A549 (cell line): ENCODE measurements at regions of chr1 and their contacts with region 1.

Region 1: GRCh38 chr1:44786138-44786840 is 1.7 kb downstream of the BEST4 start:
- DNase-seq: peak; percentile 75 to 77
- ATAC-seq: peak; percentile 63 to 70
- H3K4me3 ChIP-seq: peak overlapping the region; percentile 49
- H3K27ac ChIP-seq: peak overlapping the region; percentile 89 to 93
- H3K4me1 ChIP-seq: peaks cover 6% of the 10 kb centered on the region
- CTCF ChIP-seq: peak; percentile 76
- EP300 ChIP-seq: no peak
- POLR2A ChIP-seq: peak; percentile 40
- RAD21 ChIP-seq: peak; percentile 68 to 74

Region 2: DNA sequence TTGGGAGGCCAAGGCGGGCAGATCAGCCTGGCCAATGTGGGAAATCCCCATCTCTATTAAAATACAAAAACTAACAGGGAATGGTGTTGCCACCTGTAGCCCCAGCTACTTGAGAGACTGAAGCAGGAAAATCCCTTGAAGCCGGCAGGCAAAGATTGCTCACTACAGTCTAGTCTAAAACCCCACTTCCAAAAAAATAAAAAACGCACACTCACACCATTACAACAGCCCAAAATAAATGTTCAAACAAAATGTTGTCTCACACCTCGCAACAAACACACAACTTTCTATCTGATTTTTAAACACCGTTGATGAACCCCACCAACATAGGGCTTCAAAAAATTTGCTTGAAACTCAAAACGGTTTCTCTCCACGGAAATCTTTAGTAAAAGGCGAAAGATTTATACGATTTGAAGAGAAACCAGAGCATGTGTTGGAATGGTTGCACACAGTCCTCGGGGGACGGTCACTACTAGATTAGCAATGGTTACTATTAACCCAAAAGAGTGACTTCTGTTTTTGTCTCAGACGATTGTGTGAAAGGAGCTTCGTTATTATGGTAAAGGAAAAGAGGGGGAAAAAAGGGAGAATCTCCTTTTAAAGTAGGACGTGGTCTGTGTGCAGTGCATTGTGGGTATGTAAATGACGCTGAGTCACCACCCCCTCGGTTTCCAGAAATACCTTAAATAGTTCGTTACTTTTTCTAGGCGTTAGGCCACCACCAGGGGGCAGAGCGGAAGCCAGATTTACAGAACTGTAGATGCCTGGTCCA is 55.4 kb before region 1 on chr1 and contains the start of gene RNU5D-1:
- CTCF ChIA-PET with region 1: interaction called, 11 read pairs
- POLR2A ChIA-PET with region 1: no interaction called
- DNase-seq: peak; percentile 72 to 94
- ATAC-seq: peak; percentile 90 to 93
- H3K4me3 ChIP-seq: peak within 1 kb of the TSS; percentile 35
- H3K27ac ChIP-seq: peak within 1 kb of the TSS; percentile 86 to 94
- H3K4me1 ChIP-seq: peaks cover 19% of the 10 kb centered on the region
- CTCF ChIP-seq: peak; percentile 68
- EP300 ChIP-seq: no peak
- POLR2A ChIP-seq: peak; percentile 81
- RAD21 ChIP-seq: no peak
- polyA plus RNA-seq, gene RNU5D-1: not detected in 2 replicates

Region 3: GRCh38 chr1:44812822-44813543 is 26.7 kb after region 1 on chr1:
- CTCF ChIA-PET with region 1: interaction called, 23 read pairs
- POLR2A ChIA-PET with region 1: interaction called, 3 read pairs
- DNase-seq: no peak
- ATAC-seq: peak; percentile 4 to 5; a peak in 4 of 6 replicates
- H3K4me3 ChIP-seq: no peak overlapping the region
- H3K27ac ChIP-seq: peak overlapping the region; percentile 76 to 98
- H3K4me1 ChIP-seq: peaks cover 59% of the 10 kb centered on the region
- CTCF ChIP-seq: no peak
- EP300 ChIP-seq: no peak
- POLR2A ChIP-seq: no peak
- RAD21 ChIP-seq: no peak